ENCODE measurements at regions of chr1 and their contacts with region 1.

Region 1: DNA sequence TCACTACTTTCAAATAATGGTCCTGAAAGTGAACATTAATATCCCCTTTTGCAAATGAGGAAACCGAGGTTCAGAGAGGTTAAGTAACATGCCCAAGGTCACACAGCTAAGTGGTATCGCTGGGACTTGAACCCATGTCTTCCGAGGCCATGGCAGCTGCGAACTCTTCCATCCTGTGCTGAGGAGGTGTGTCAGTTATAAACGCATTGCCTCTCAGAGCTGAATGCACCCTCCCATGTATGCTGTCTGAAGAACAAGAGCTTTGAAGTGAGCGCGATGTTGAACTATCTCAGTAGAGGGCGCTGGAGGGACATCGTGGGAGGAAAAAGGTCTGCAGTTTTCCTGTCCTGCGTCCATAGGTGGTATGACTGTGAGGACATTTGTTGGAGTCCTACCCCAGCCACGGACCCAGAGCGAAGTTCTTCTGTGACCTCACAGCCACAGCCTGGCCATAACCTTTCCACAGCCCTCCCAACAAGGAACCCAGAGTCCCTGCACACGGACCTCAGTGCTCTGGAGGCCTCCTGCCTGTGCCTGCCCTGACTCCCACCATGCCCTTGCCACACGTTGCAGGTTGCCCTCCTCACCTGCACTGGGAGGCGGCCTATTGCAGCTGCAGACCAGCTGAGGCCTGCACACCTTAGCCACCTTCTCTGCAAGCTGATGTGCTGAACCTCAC is 7.5 kb downstream of the MYOC start:
- DNase-seq: peak; percentile 49
- ATAC-seq: peak; percentile 91
- H3K4me3 ChIP-seq: no peak overlapping the region
- H3K27ac ChIP-seq: no peak overlapping the region
- H3K4me1 ChIP-seq: no peaks in the 10 kb centered on the region
- H3K27me3 ChIP-seq: no peaks in the 10 kb centered on the region
- CTCF ChIP-seq: peak; percentile 66 to 82 (median 82)
- EP300 ChIP-seq: no peak
- POLR2A ChIP-seq: no peak
- RAD21 ChIP-seq: peak; percentile 70

Region 2: GRCh38 chr1:171583581-171584201 is 61.3 kb before region 1 on chr1:
- CTCF ChIA-PET with region 1: interaction called, 14 read pairs
- POLR2A ChIA-PET with region 1: no interaction called
- RAD21 ChIA-PET with region 1: interaction called, 12 read pairs
- SMC1A ChIA-PET with region 1: interaction called, 7 read pairs
- in situ Hi-C with region 1: no loop called
- intact Hi-C with region 1: no loop called
- DNase-seq: no peak
- ATAC-seq: no peak
- H3K4me3 ChIP-seq: no peak overlapping the region
- H3K27ac ChIP-seq: no peak overlapping the region
- H3K4me1 ChIP-seq: no peaks in the 10 kb centered on the region
- H3K27me3 ChIP-seq: no peaks in the 10 kb centered on the region
- CTCF ChIP-seq: no peak
- EP300 ChIP-seq: no peak
- POLR2A ChIP-seq: no peak
- RAD21 ChIP-seq: no peak

Region 3: DNA sequence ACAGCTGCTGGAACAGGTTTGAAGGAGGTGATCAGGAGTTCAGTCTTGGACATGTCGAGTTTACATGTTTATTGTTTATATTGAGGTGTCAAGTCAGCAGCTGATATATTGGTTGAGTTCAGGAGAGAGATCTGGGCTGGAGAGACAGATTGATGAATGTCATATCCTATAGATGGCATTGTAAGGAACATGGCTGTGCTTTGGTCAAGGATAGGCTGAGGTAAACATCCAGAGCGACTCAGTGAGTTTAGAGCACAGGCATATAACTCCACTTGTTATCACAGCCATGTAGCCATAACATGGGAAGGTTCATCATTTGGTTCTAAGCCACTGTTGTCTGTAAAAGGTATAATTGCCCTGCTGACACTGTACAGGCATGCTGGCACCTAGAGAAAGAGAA is 28.4 kb before region 1 on chr1:
- CTCF ChIA-PET with region 1: interaction called, 38 read pairs
- POLR2A ChIA-PET with region 1: interaction called, 3 read pairs
- RAD21 ChIA-PET with region 1: interaction called, 11 read pairs
- SMC1A ChIA-PET with region 1: interaction called, 20 read pairs
- in situ Hi-C with region 1: no loop called
- intact Hi-C with region 1: no loop called
- DNase-seq: no peak
- ATAC-seq: no peak
- H3K4me3 ChIP-seq: no peak overlapping the region
- H3K27ac ChIP-seq: no peak overlapping the region
- H3K4me1 ChIP-seq: no peaks in the 10 kb centered on the region
- H3K27me3 ChIP-seq: no peaks in the 10 kb centered on the region
- CTCF ChIP-seq: no peak
- EP300 ChIP-seq: no peak
- POLR2A ChIP-seq: no peak
- RAD21 ChIP-seq: no peak

Region 4: GRCh38 chr1:171674431-171675405 is 29.8 kb after region 1 on chr1:
- CTCF ChIA-PET with region 1: interaction called, 15 read pairs
- POLR2A ChIA-PET with region 1: no interaction called
- RAD21 ChIA-PET with region 1: no interaction called
- SMC1A ChIA-PET with region 1: interaction called, 3 read pairs
- in situ Hi-C with region 1: no loop called
- intact Hi-C with region 1: no loop called
- DNase-seq: no peak
- ATAC-seq: no peak
- H3K4me3 ChIP-seq: no peak overlapping the region
- H3K27ac ChIP-seq: no peak overlapping the region
- H3K4me1 ChIP-seq: no peaks in the 10 kb centered on the region
- H3K27me3 ChIP-seq: no peaks in the 10 kb centered on the region; a peak in 1 of 4 replicates
- CTCF ChIP-seq: no peak
- EP300 ChIP-seq: no peak
- POLR2A ChIP-seq: no peak
- RAD21 ChIP-seq: no peak

Region 5: DNA sequence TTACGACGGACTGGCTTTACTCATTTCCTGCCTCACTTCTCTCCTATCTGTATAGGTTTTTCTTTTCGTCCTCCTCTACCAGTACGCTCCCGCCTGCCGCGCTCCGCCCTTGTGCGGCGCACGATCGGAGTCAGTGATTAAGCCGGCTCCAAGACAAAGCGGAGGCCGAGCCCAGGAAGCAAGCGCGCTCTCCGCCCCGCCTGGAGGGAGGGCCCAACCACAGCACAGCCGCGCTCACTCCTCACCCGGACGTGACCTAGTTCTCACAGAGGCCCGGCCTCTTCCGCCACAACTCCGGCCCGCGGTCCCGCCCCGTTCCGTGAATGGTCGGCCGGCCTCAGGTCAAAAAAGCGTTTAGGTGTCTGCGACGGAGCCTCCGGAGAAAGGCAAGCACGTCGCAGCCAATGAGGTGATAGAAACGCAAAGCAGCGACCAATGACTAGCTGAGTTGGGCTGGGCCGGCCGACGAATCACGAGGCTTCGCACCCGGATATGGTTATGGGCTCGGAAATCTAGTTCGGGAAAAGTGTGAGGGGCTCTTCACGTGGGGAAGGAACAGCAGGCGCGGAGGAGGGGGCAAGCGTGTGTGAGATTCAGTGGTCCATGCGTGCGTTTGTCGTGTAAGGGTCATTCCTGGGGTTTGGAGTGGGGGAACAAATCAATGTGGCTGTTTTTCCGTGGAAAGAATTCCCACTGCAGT is 136.4 kb after region 1 on chr1 and contains the start of gene METTL13:
- CTCF ChIA-PET with region 1: interaction called, 12 read pairs
- POLR2A ChIA-PET with region 1: no interaction called
- RAD21 ChIA-PET with region 1: interaction called, 5 read pairs
- SMC1A ChIA-PET with region 1: interaction called, 6 read pairs
- in situ Hi-C with region 1: no loop called
- intact Hi-C with region 1: loop called (anchors 10 kb)
- DNase-seq: peak; percentile 96
- ATAC-seq: peak; percentile 99
- H3K4me3 ChIP-seq: peak within 1 kb of the TSS; percentile 93
- H3K27ac ChIP-seq: peak within 1 kb of the TSS; percentile 82
- H3K4me1 ChIP-seq: peaks cover 10% of the 10 kb centered on the region; the same call in 1 of the 2 replicates
- H3K27me3 ChIP-seq: no peaks in the 10 kb centered on the region
- CTCF ChIP-seq: no peak
- EP300 ChIP-seq: no peak
- POLR2A ChIP-seq: peak; percentile 96
- RAD21 ChIP-seq: no peak
- polyA plus RNA-seq, gene METTL13: 12.2 to 16.8 TPM

Region 6: DNA sequence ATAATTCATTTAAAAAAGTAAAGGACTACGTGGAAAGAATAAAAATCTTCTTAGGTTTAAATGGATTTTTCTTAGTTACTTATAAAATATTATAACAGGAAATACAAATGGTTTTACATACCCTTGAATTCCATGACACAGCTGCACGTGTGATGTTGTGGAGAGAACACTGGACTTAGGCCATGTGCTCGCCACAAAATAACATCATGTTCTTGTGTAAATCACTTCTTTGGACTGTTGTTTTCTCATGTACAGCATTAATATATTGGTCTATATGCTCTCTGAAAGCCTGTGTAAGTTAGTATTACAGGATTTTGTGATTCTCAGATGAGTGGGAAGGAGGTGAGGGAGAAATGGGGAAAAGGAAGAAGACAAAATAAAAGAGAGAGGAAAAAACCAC is 424.6 kb after region 1 on chr1:
- CTCF ChIA-PET with region 1: no interaction called
- POLR2A ChIA-PET with region 1: no interaction called
- RAD21 ChIA-PET with region 1: no interaction called
- SMC1A ChIA-PET with region 1: no interaction called
- in situ Hi-C with region 1: no loop called
- intact Hi-C with region 1: no loop called
- DNase-seq: no peak
- ATAC-seq: no peak
- H3K4me3 ChIP-seq: no peak overlapping the region
- H3K27ac ChIP-seq: no peak overlapping the region
- H3K4me1 ChIP-seq: no peaks in the 10 kb centered on the region
- H3K27me3 ChIP-seq: no peaks in the 10 kb centered on the region
- CTCF ChIP-seq: no peak
- EP300 ChIP-seq: no peak
- POLR2A ChIP-seq: no peak
- RAD21 ChIP-seq: no peak

Region 7: GRCh38 chr1:172789866-172790644 is 1145.1 kb after region 1 on chr1:
- CTCF ChIA-PET with region 1: no interaction called
- POLR2A ChIA-PET with region 1: no interaction called
- RAD21 ChIA-PET with region 1: no interaction called
- SMC1A ChIA-PET with region 1: no interaction called
- in situ Hi-C with region 1: no loop called
- intact Hi-C with region 1: no loop called
- DNase-seq: no peak
- ATAC-seq: no peak
- H3K4me3 ChIP-seq: no peak overlapping the region
- H3K27ac ChIP-seq: no peak overlapping the region
- H3K4me1 ChIP-seq: no peaks in the 10 kb centered on the region
- H3K27me3 ChIP-seq: no peaks in the 10 kb centered on the region
- CTCF ChIP-seq: no peak
- EP300 ChIP-seq: no peak
- POLR2A ChIP-seq: no peak
- RAD21 ChIP-seq: no peak

Measured in GM12878 (cell line).